ENCODE measurements at regions of chr9 and their contacts with region 1.

Region 1: DNA sequence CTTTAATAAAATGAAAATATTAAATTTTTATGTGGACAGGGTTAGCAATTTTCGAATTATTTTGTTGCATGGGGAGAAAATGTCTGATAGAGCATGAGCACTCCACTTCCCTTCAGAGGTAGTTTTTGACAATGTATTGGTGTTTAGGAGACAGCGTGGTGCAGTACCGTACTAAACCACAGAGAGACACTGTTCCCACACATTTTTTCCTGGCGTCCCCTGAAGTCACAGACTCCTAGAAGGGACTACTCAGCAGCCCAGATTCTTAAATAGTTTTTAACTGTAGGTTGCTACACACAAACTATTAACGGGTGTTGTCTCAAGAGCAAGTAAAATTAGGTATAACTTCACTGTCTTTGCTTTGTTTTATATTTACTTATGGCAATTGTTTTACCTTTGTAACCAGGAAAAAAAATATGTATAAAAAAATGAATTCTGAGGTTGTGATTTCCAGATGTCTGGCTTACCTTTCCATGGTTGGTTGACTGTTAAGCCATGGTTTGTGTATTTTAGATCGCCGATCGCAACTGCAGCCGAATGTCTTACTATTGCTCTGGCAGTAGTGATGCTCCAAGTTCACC is 171.2 kb downstream of the DOCK8 start:
- DNase-seq: peak in 1 of 2 donors; percentile 31
- H3K4me3 ChIP-seq: no peak overlapping the region
- H3K27ac ChIP-seq: no peak overlapping the region
- H3K4me1 ChIP-seq: no peaks in the 10 kb centered on the region
- H3K27me3 ChIP-seq: no peaks in the 10 kb centered on the region
- CTCF ChIP-seq: peak; percentile 81 to 82

Region 2: DNA sequence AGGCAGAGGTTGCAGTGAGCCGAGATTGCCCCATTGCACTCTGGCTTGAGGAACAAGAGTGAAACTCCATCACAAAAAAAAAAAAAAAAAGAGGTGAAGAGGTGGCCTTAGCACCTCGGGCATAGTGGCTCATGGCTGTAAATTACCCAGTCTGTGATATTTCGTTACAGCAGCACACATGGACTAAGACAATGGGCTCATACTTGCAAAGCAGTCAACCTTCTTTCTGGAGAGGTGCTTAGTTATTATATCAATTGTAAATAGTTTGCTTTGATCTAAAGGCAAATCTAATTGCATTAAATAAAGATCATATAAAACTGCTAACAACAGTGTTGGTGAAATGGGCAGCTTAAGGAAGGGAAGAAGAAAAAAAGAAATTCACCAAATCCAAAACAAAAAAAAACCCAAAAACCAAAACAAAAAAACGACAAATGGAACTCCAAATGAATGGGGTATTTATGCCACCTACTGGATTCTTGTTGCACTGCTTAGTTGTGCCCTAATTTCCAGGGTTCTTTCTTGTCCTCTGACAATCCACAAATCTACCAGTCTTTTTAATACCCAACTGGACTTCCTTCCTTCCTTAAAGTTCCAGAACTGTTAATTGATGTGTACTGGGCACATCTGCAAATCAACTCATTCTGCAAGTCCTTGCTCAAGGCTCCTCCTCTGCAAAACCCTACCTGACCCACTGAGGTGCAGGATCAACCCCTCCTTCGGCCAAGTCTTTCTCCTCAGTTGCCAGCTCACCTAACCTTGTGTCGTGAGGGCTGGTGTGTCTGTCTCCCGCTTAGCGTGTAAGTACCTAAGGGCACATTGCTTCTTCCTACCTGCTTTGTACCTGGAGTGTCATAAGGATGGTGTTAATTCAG is 420.6 kb after region 1 on chr9:
- intact Hi-C with region 1: loop called (anchors 5 kb)
- DNase-seq: no peak
- H3K4me3 ChIP-seq: no peak overlapping the region
- H3K27ac ChIP-seq: no peak overlapping the region
- H3K4me1 ChIP-seq: no peaks in the 10 kb centered on the region
- H3K27me3 ChIP-seq: no peaks in the 10 kb centered on the region
- CTCF ChIP-seq: peak; percentile 70 to 80